Activated CD8-positive, alpha-beta T cell treated with anti-CD3 and anti-CD28 coated beads for 36 hours (primary cell): ENCODE measurements at regions of chr19 and their contacts with region 1.

Region 1: DNA sequence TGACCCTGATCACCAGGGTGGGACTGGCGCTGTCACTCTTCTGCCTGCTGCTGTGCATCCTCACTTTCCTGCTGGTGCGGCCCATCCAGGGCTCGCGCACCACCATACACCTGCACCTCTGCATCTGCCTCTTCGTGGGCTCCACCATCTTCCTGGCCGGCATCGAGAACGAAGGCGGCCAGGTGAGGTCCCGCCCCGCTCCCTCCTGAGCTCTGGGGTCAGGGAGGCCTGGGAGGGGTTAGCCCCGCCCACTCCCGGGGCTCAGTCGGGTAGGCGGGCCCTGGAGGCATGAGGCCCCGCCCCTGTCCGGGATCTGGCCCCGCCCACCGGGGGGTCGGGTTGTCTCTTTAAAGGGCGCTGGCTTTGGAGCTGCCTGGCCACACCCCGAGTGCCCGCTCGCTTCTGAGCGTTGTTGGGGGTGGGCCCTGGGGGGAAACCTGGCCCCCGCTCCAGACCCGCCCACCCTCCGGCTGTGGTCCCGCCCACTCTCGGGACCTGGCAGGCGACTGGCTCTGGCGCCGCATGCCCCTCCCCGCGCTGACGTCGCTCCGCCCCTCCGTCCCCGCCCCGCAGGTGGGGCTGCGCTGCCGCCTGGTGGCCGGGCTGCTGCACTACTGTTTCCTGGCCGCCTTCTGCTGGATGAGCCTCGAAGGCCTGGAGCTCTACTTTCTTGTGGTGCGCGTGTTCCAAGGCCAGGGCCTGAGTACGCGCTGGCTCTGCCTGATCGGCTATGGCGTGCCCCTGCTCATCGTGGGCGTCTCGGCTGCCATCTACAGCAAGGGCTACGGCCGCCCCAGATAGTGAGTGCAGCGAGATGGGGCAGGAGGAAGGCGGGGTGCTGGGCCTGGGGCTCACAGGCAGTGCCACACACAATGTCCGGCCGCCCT is 13.1 kb downstream of the DDX39A start:
- DNase-seq: peak; percentile 93
- ATAC-seq: peak; percentile 84
- H3K4me3 Mint-ChIP-seq: peak overlapping the region; percentile 26
- H3K27ac Mint-ChIP-seq: peak overlapping the region; percentile 66
- H3K4me1 Mint-ChIP-seq: peaks cover 21% of the 10 kb centered on the region
- H3K27me3 Mint-ChIP-seq: no peaks in the 10 kb centered on the region
- CTCF ChIP-seq: peak; percentile 90

Region 2: DNA sequence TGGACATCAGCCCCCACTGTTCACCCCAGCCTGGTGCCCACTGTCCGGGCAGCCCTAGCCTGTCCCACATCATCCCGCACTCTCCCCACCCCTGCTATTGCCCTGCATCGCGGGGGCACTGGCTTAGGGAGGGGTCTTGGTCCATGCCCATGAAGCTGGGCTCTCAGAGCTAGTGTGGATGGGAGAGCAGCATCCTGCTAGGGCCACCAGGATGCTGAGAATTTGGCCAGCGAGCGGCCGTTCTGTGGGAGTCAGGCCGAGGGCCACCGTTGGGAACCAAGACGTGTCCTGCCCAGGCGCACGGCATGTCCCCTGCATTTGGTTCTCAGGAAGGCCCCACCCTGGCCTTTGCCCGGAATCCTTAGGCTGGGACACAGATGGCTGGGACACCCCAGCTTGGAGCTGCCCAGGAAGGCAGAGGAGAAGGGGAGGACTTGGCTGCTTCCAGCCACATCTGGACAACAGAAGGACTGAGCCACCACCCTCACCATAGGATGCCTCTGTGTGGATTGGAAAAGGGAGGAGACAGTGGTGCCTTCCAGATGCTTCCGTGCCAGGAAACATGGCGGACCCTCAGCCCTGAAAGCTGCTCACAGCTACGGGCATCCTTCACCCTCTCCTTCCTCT is 10.2 kb before region 1 on chr19:
- CTCF ChIA-PET with region 1: interaction called, 15 read pairs
- POLR2A ChIA-PET with region 1: interaction called, 54 read pairs
- intact Hi-C with region 1: no loop called
- DNase-seq: no peak
- ATAC-seq: peak; percentile 17
- H3K4me3 Mint-ChIP-seq: no peak overlapping the region
- H3K27ac Mint-ChIP-seq: peak overlapping the region; percentile 52
- H3K4me1 Mint-ChIP-seq: peaks cover 13% of the 10 kb centered on the region
- H3K27me3 Mint-ChIP-seq: no peaks in the 10 kb centered on the region
- CTCF ChIP-seq: no peak

Region 3: DNA sequence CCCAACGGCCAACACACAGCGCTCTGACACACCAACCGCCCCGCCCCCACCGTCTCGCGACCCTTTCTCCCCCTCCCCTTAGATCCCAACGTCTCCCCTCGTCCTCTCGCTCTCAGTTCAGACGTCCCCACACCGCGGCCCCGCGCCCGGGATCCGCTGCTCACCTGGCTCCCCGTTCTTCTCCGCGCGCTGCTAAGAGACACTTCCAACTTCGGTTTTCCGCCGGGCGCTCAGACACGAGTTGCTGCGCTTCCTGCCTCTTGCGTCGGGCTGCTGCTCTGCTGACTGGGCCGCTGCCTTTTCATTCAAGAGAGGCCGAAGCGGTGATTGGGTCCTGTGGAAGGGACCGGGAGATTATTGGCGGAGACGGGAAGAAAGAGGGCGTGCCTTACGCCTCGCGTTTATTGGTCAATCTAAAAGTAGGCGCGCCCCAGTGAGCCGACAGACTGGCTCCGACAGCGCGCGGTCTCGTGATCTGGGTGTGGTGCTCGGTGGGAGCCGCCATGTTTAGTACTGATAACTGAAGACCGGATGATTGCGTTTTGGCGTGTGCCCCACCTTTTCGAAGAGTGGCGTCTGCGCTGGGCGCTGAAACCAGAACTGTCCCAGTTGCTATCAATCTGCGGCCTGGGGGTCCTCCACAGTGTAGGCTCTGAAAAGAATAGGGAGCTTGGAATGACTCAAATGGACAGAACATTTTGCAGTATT is 13.3 kb after region 1 on chr19 and contains the start of gene DDX39A:
- CTCF ChIA-PET with region 1: interaction called, 21 read pairs
- POLR2A ChIA-PET with region 1: interaction called, 37 read pairs
- intact Hi-C with region 1: no loop called
- DNase-seq: peak; percentile 99
- ATAC-seq: peak; percentile 93
- H3K4me3 Mint-ChIP-seq: peak within 1 kb of the TSS; percentile 93
- H3K27ac Mint-ChIP-seq: peak within 1 kb of the TSS; percentile 98
- H3K4me1 Mint-ChIP-seq: peaks cover 27% of the 10 kb centered on the region
- H3K27me3 Mint-ChIP-seq: no peaks in the 10 kb centered on the region
- CTCF ChIP-seq: no peak
- total RNA-seq, gene DDX39A: 217 to 226 TPM

Region 4: DNA sequence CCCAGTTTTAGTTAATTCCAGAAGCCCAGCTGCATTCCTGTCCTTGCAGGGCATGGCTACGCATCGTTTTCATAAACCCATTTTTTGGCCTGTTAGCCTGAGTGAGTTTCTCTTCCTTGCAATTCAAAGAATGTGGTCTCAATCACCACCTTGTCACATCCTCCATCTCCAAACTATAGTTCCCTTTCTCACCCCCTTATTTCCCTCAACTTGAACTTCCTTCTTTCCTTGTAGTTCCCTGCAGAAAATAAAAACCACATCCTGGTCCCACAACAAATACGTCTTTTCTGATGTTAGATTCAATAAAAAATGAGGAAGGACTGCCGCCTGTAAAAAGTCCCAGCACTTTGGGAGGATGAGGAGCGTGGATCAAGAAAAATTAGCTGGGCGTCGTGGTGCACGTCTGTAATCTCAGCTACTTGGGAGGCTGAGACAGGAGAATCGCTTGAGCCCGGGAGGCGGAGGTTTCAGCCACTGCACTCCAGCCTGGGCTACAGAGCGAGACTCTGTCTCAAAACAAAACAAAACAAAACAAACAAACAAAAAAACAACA is 255.4 kb after region 1 on chr19:
- CTCF ChIA-PET with region 1: no interaction called
- POLR2A ChIA-PET with region 1: no interaction called
- intact Hi-C with region 1: no loop called
- DNase-seq: no peak
- ATAC-seq: no peak
- H3K4me3 Mint-ChIP-seq: no peak overlapping the region
- H3K27ac Mint-ChIP-seq: no peak overlapping the region
- H3K4me1 Mint-ChIP-seq: no peaks in the 10 kb centered on the region
- H3K27me3 Mint-ChIP-seq: peaks cover 9% of the 10 kb centered on the region
- CTCF ChIP-seq: no peak

Region 5: DNA sequence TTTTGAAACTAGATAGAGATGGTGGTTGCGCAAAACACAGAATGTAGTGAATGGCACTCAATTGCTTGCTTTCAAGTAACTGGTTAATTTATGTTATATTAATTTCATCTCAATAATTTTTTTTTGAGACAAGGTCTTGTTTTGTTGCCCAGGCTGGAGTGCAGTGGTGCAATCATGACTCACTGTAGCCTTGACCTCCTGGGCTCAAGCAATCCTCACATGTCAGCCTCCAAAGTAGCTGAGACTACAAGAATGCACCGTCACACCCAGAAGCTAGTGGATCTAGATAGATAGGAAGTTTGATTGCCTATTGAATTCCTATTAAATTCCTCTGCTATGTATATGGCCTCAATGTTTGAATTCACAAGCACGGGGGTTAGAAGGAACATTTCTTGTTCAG is 398.8 kb after region 1 on chr19:
- CTCF ChIA-PET with region 1: no interaction called
- POLR2A ChIA-PET with region 1: no interaction called
- intact Hi-C with region 1: no loop called
- DNase-seq: no peak
- ATAC-seq: no peak
- H3K4me3 Mint-ChIP-seq: no peak overlapping the region
- H3K27ac Mint-ChIP-seq: no peak overlapping the region
- H3K4me1 Mint-ChIP-seq: no peaks in the 10 kb centered on the region
- H3K27me3 Mint-ChIP-seq: peaks cover 10% of the 10 kb centered on the region
- CTCF ChIP-seq: no peak